Upper lobe of right lung (tissue), 1 donor: ENCODE measurements at regions of chr1 and their contacts with region 1.

Region 1: GRCh38 chr1:162056043-162056442 is 13.4 kb upstream of the NOS1AP start:
- DNase-seq: peak; percentile 67
- ATAC-seq: peak; percentile 98
- H3K4me3 ChIP-seq: no peak overlapping the region
- H3K27ac ChIP-seq: no peak overlapping the region
- H3K4me1 ChIP-seq: no peaks in the 10 kb centered on the region
- H3K27me3 ChIP-seq: no peaks in the 10 kb centered on the region
- CTCF ChIP-seq: peak; percentile 87

Region 2: GRCh38 chr1:162159515-162159914 is 103.5 kb after region 1 on chr1:
- intact Hi-C with region 1: no loop called
- DNase-seq: no peak
- ATAC-seq: peak; percentile 39
- H3K4me3 ChIP-seq: no peak overlapping the region
- H3K27ac ChIP-seq: no peak overlapping the region
- H3K4me1 ChIP-seq: no peaks in the 10 kb centered on the region
- H3K27me3 ChIP-seq: no peaks in the 10 kb centered on the region
- CTCF ChIP-seq: no peak

Region 3: GRCh38 chr1:162276493-162276892 is 220.4 kb after region 1 on chr1:
- intact Hi-C with region 1: loop called (anchors 5 kb)
- DNase-seq: no peak
- ATAC-seq: peak; percentile 79
- H3K4me3 ChIP-seq: no peak overlapping the region
- H3K27ac ChIP-seq: no peak overlapping the region
- H3K4me1 ChIP-seq: no peaks in the 10 kb centered on the region
- H3K27me3 ChIP-seq: no peaks in the 10 kb centered on the region
- CTCF ChIP-seq: peak; percentile 51

Region 4: DNA sequence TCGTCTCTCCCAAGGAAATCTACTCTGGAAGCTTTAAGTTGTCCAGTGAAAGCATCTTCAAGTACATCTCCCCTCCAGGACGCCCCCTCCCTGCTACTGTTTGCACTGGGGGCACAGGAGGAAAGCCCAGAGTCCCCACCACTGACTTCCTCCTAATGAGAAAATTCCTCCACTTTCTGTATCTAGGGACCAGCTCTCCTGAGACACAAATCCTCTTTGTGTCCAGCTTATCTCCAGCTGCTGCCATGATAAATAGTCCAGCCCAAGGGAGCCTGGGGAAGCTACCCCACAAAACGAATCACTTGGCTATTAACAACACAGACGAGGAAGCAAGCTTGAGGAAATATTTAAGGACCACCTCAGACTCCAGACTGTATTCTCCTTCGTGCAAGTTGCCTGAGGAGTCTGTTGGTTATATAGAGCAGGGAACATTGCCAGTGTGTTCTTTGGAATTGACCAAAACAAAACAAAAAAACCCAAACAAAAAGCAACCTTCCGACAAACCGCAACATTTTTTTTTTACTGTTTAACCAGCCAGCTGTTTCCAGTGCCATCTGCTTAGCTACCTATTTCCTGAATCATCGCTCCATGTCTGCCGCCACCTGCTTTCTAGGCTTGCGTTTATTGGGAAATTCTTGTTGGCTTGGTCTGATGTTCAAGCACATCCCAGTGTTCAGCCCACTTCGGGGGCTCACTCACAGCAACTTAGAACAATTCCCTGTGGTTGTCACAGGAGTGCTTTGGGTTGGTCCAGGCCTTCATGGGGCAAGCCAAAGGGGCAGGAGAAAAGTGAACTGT is 333.2 kb after region 1 on chr1:
- intact Hi-C with region 1: loop called (anchors 10 kb)
- DNase-seq: no peak
- ATAC-seq: no peak
- H3K4me3 ChIP-seq: no peak overlapping the region
- H3K27ac ChIP-seq: no peak overlapping the region
- H3K4me1 ChIP-seq: no peaks in the 10 kb centered on the region
- H3K27me3 ChIP-seq: no peaks in the 10 kb centered on the region
- CTCF ChIP-seq: no peak